Mammary epithelial cell (primary cell): ENCODE measurements at regions of chr22 and their contacts with region 1.

Region 1: DNA sequence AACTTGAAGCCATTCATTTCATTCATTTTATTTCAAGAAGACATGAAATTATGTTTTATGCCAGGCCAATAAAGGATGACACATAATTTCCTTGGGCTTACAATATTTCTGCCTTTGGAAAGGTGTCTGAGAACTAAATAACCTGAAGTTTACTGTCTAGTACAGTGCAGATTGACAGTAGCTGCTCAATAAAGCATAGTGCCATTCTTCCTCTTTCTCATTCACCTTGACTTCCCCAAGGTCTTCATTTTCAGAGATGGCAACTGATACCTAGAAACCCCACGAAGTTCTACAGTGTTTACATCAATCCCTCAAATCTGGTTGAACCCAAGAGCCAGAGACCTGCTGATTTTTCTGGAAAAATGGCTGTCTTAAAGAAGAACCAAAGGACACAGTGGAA is 144.3 kb upstream of the SYN3 start:
- DNase-seq: no peak
- H3K4me3 ChIP-seq: no peak overlapping the region
- H3K27ac ChIP-seq: no peak overlapping the region
- H3K4me1 ChIP-seq: no peaks in the 10 kb centered on the region
- H3K27me3 ChIP-seq: peaks cover 4% of the 10 kb centered on the region
- CTCF ChIP-seq: no peak

Region 2: GRCh38 chr22:32803020-32803754 is 399.3 kb before region 1 on chr22:
- CTCF ChIA-PET with region 1: no interaction called
- dilution Hi-C with region 1: no loop called
- in situ Hi-C with region 1: no loop called
- intact Hi-C with region 1: loop called (anchors 1 kb)
- DNase-seq: peak; percentile 68
- H3K4me3 ChIP-seq: peak overlapping the region; percentile 61 to 89 (median 68)
- H3K27ac ChIP-seq: peak overlapping the region; percentile 41
- H3K4me1 ChIP-seq: peaks cover 21% of the 10 kb centered on the region
- H3K27me3 ChIP-seq: no peaks in the 10 kb centered on the region
- CTCF ChIP-seq: no peak

Region 3: DNA sequence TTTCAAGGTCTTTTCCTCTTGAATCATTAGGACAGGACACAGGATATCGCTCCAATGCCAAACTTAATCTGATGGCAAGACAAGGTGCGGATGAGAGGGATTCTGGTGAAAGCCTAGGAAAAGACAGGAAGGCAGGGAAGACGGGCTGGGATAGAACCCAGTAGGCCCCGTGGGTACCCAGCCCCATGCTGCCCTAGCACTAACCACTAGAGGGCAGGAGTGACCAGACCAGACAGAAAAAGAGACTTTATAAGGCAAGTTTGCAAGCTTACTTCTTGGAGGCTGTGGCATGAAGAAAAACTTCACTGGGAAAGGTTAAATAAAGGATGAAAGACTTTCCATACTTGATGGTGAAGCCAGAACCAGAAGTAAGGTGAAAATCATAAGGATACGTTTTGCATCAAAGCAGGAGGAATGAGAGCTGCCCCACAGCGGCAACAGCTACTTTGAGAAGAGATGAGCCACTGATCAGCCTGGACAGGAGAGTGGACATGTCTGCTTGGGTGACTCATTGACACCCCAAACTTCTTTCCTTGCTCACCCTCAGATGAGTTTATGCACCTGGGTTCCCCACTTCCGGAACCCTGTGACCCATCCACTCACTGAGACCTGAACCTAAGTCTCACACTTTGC is 184.1 kb before region 1 on chr22:
- CTCF ChIA-PET with region 1: interaction called, 8 read pairs
- dilution Hi-C with region 1: no loop called
- in situ Hi-C with region 1: loop called (anchors 5 kb)
- intact Hi-C with region 1: loop called (anchors 1 kb)
- DNase-seq: no peak
- H3K4me3 ChIP-seq: no peak overlapping the region
- H3K27ac ChIP-seq: no peak overlapping the region
- H3K4me1 ChIP-seq: no peaks in the 10 kb centered on the region
- H3K27me3 ChIP-seq: no peaks in the 10 kb centered on the region
- CTCF ChIP-seq: peak; percentile 93 to 95

Region 4: DNA sequence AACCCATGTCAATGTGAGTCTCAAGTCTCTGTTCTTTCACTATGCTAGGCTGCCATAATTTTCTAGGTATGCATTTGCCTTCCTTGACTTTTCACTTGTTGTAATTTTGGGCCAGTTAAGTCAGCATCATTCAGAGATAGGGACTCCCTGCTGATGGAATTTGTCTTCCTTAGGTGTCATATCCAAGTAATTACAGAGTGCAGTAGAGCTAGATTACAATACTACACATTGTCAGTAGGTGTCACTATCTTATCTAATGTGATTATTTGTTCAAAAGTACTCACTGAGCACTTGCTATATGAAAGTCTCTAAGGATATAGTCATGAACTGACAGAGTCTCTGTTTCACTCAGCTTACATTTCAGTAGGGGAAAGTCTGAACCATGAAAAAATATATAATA is 119.2 kb before region 1 on chr22:
- CTCF ChIA-PET with region 1: no interaction called
- dilution Hi-C with region 1: no loop called
- in situ Hi-C with region 1: no loop called
- intact Hi-C with region 1: loop called (anchors 1 kb)
- DNase-seq: no peak
- H3K4me3 ChIP-seq: no peak overlapping the region
- H3K27ac ChIP-seq: no peak overlapping the region
- H3K4me1 ChIP-seq: no peaks in the 10 kb centered on the region
- H3K27me3 ChIP-seq: no peaks in the 10 kb centered on the region
- CTCF ChIP-seq: peak; percentile 46 to 58

Region 5: DNA sequence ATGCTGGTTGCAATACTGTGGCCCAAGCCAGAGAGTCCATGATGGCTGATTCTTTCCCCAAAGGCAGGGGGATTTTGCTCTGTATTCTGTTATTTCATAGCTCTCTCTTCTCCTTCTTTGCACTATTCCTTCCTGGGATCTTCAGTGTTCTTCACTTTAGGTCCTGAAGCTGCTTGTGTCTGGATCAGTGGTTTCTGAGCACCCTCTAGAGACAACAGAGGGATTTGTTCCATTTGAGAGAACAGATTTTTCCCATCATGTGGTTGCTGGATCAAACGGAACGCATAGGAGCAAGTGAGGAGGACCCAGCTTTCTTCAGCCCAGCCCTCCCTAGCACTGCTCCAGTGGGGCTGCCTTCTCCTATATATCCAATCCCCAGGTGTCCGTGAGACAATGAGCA is 75.6 kb before region 1 on chr22:
- CTCF ChIA-PET with region 1: interaction called, 4 read pairs
- dilution Hi-C with region 1: no loop called
- in situ Hi-C with region 1: no loop called
- intact Hi-C with region 1: loop called (anchors 1 kb)
- DNase-seq: peak; percentile 37
- H3K4me3 ChIP-seq: no peak overlapping the region
- H3K27ac ChIP-seq: no peak overlapping the region
- H3K4me1 ChIP-seq: no peaks in the 10 kb centered on the region
- H3K27me3 ChIP-seq: no peaks in the 10 kb centered on the region
- CTCF ChIP-seq: peak; percentile 49 to 67

Region 6: DNA sequence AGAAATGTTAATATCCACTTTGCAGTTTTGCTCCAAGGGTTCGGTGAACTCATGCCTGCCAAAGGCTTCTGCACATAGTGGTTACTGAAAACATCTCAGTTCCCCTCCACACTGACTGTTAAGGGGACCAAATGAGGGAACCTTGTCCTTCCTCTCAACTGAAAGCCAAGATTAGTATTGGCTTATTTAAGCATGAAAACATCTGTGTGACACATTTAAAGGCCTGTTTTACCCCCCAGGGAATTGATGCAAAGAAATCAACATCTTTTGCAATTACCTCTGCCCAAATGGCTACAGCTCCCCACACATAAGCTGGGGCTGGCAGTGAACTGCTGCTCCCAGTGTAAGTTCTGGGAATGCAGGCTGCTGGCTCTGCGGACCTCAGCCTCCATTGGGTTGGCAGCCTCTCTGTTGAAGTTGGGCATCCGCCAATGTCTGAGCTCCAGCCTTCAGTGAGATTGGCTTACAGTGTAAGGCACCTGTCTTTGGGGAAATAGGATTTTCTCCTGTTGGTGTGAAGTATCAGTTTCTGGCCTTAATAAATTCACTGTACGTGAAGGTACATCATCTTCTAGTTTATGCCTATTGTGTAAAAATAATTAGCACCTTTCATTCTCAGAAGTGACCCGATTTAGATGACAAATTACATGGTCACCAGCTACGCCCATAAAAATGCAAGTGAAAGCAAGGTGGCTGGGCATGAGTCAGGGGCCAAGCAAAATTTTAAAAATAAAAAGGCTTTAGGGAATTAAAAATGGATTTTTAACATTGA is 69.1 kb after region 1 on chr22:
- CTCF ChIA-PET with region 1: no interaction called
- dilution Hi-C with region 1: no loop called
- in situ Hi-C with region 1: no loop called
- intact Hi-C with region 1: loop called (anchors 5 kb)
- DNase-seq: no peak
- H3K4me3 ChIP-seq: no peak overlapping the region
- H3K27ac ChIP-seq: no peak overlapping the region
- H3K4me1 ChIP-seq: no peaks in the 10 kb centered on the region
- H3K27me3 ChIP-seq: no peaks in the 10 kb centered on the region
- CTCF ChIP-seq: no peak